ENCODE measurements at regions of chr6 and their contacts with region 1.

Region 1: GRCh38 chr6:121000381-121000780 is 333.9 kb downstream of the TBC1D32 start:
- DNase-seq: no peak
- H3K27ac ChIP-seq: no peak overlapping the region
- CTCF ChIP-seq: no peak

Region 2: GRCh38 chr6:120965814-120966213 is 34.6 kb before region 1 on chr6:
- CTCF ChIA-PET with region 1: no interaction called
- POLR2A ChIA-PET with region 1: no interaction called
- DNase-seq: peak; percentile 1
- H3K27ac ChIP-seq: no peak overlapping the region
- CTCF ChIP-seq: no peak

Region 3: GRCh38 chr6:121247386-121247785 is 247.0 kb after region 1 on chr6:
- CTCF ChIA-PET with region 1: no interaction called
- POLR2A ChIA-PET with region 1: no interaction called
- DNase-seq: no peak
- H3K27ac ChIP-seq: no peak overlapping the region
- CTCF ChIP-seq: no peak

Region 4: GRCh38 chr6:121810158-121811032 is 810.0 kb after region 1 on chr6:
- CTCF ChIA-PET with region 1: interaction called, 11 read pairs
- POLR2A ChIA-PET with region 1: no interaction called
- DNase-seq: no peak
- H3K27ac ChIP-seq: no peak overlapping the region
- CTCF ChIP-seq: no peak

Measured in RWPE1 (cell line).